ENCODE measurements at regions of chr7 and their contacts with region 1.

Region 1: DNA sequence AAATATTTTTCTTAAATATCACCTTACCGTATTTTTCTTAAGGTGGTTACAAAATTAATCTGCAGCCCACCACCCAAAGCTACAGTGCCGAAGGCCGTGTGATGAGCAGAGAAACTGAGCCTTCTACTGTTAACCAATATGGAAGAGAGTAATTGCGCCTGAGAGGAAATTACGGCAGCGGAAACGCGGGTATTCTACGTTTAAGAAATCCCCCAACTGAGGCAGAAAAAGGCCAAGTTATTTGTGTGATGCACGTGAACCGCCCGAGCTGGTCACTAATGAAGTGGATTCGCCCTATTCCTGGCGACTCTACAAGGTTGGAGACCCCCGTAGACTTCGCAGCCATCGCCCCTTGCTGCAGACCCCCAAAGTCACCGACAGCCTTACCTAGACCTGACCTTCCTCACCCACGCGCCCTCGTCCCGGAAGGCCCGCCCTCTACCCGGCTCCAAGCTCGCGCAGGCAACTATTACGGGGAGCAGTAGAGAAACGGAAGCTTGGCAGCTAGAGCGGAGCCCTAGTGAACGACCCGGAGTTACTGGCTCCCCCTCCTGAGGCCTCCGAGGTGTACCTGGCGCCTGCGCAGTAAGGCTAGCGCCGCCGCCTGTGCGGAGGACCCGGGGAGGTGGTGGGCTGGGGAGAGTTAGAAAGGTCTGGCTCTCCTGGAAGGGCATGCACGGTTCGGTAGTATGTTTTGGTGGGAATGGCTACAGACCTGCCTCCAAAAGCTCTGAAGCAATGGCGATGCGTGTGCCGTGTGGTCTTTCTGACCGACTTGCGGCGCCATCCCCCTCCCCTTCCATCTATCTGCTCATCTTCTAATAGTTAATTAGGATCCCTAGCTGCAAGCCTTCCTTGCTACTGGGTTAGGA is at the start of gene MRPS33:
- DNase-seq: peak; percentile 98
- H3K4me3 ChIP-seq: peak within 1 kb of the TSS; percentile 53 to 68 (median 64)
- H3K27ac ChIP-seq: peak within 1 kb of the TSS; percentile 88 to 90 (median 89)
- H3K4me1 ChIP-seq: peaks cover 0 to 21% (median 8%) of the 10 kb centered on the region in 4 donors
- H3K27me3 ChIP-seq: no peaks in the 10 kb centered on the region
- CTCF ChIP-seq: no peak
- EP300 ChIP-seq: peak in 1 of 4 donors; percentile 31
- POLR2A ChIP-seq: peak; percentile 63 to 64
- total RNA-seq, gene MRPS33: 14.7 to 32.7 (median 20.9) TPM

Region 2: GRCh38 chr7:140479062-140479738 is 535.6 kb before region 1 on chr7 and contains the start of gene MKRN1:
- intact Hi-C with region 1: loop called (anchors 10 kb)
- DNase-seq: peak; percentile 96
- H3K4me3 ChIP-seq: peak within 1 kb of the TSS; percentile 86 to 99 (median 98)
- H3K27ac ChIP-seq: peak within 1 kb of the TSS; percentile 87 to 96 (median 90)
- H3K4me1 ChIP-seq: peaks cover 0 to 34% (median 22%) of the 10 kb centered on the region in 4 donors
- H3K27me3 ChIP-seq: no peaks in the 10 kb centered on the region
- CTCF ChIP-seq: no peak
- EP300 ChIP-seq: no peak
- POLR2A ChIP-seq: peak; percentile 47 to 79
- total RNA-seq, gene MKRN1: 63.5 to 73.7 (median 69.4) TPM

Region 3: DNA sequence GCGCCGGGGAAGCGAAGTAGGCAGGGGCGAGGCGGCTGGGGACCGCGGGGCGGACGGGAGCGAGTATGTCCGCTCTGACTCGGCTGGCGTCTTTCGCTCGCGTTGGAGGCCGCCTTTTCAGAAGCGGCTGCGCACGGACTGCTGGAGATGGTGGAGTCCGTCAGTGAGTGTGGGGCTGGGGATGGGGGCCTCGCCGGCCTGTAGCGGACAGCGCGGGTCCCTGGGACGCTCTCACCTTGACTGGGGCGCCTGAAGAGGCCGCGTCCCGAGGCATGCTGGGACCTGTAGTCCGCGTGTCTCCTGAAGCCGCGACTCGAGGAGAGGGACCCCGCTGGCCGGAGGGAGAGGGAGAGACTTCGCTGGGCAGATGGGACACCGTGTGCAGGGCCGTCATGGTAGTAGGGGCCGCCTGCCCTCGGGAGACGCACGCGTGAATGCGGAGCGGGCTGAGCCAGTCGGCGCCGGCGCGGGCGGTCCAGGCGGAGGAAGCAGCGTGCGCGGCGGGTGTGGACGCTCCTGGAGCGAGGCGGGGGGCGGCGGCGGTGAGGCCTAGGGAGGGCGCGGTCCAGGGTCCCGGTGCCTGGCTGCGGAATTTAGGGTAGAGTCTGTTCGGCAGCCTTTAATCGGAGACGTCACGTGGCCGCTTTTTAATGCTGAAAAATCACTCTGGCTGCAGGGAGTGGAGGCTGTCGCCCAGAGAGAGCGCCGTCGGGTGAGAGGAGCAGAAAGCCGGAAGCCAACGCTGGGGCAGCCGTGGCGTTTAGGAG is 317.9 kb before region 1 on chr7 and contains the start of gene NDUFB2:
- intact Hi-C with region 1: loop called (anchors 2 kb)
- DNase-seq: peak; percentile 90
- H3K4me3 ChIP-seq: peak within 1 kb of the TSS; percentile 71 to 93 (median 87)
- H3K27ac ChIP-seq: peak within 1 kb of the TSS; percentile 94 to 98 (median 95)
- H3K4me1 ChIP-seq: peaks cover 0 to 28% (median 22%) of the 10 kb centered on the region in 4 donors
- H3K27me3 ChIP-seq: no peaks in the 10 kb centered on the region
- CTCF ChIP-seq: no peak
- EP300 ChIP-seq: no peak
- POLR2A ChIP-seq: peak; percentile 73 to 91
- total RNA-seq, gene NDUFB2: 170 to 377 (median 267) TPM

Region 4: GRCh38 chr7:140924019-140924820 is 90.5 kb before region 1 on chr7:
- intact Hi-C with region 1: loop called (anchors 1 kb)
- DNase-seq: peak; percentile 88
- H3K4me3 ChIP-seq: peak overlapping the region; percentile 91 to 97 (median 96)
- H3K27ac ChIP-seq: peak overlapping the region; percentile 96 to 100 (median 100)
- H3K4me1 ChIP-seq: peaks cover 3 to 42% (median 23%) of the 10 kb centered on the region in 4 donors
- H3K27me3 ChIP-seq: no peaks in the 10 kb centered on the region
- CTCF ChIP-seq: peak in 2 of 4 experiments; percentile 26 to 34
- EP300 ChIP-seq: peak in 1 of 4 donors; percentile 5
- POLR2A ChIP-seq: no peak

Region 5: GRCh38 chr7:141737834-141738591 is 723.3 kb after region 1 on chr7 and contains the start of gene SSBP1:
- intact Hi-C with region 1: loop called (anchors 5 kb)
- DNase-seq: peak; percentile 94
- H3K4me3 ChIP-seq: peak within 1 kb of the TSS; percentile 65 to 83 (median 70)
- H3K27ac ChIP-seq: peak within 1 kb of the TSS; percentile 81 to 87 (median 84)
- H3K4me1 ChIP-seq: peaks cover 0 to 34% (median 17%) of the 10 kb centered on the region in 4 donors
- H3K27me3 ChIP-seq: no peaks in the 10 kb centered on the region
- CTCF ChIP-seq: peak; percentile 43 to 82 (median 66)
- EP300 ChIP-seq: peak in 1 of 4 donors; percentile 37
- POLR2A ChIP-seq: peak; percentile 22 to 31
- total RNA-seq, gene SSBP1: 77.0 to 137 (median 121) TPM

Measured in sigmoid colon (tissue), 7 donors.